ENCODE measurements at regions of chr17 and their contacts with region 1.

Region 1: DNA sequence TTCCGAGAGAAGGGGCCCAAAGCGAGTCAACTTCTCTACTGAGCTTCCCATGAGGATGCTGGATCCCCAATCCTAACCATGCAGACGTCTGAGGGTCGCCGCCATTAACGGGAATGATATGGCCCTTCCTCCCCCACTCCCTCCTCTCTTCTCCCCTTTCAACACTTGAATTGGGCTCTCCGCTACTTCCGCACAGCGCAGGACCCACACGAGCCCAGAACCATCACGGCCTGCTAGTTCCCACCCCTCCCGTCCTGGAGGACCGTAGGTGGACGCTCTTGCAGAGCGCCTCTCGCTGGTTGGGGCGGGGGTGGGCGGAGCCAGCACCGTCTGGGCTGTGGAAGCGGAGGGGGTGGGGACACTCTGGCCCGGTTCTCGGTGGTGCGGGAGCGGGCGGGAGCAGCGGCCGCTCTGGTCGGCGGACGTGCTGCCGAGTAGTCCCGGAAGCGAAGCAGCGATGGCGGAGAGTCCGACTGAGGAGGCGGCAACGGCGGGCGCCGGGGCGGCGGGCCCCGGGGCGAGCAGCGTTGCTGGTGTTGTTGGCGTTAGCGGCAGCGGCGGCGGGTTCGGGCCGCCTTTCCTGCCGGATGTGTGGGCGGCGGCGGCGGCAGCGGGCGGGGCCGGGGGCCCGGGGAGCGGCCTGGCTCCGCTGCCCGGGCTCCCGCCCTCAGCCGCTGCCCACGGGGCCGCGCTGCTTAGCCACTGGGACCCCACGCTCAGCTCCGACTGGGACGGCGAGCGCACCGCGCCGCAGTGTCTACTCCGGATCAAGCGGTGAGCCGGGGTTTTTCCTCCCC is at the start of gene UBE2Z:
- DNase-seq: peak; percentile 96
- H3K4me3 ChIP-seq: peak within 1 kb of the TSS; percentile 50 to 84 (median 68)
- H3K27ac ChIP-seq: peak within 1 kb of the TSS; percentile 89
- H3K4me1 ChIP-seq: peaks cover 27% of the 10 kb centered on the region
- H3K27me3 ChIP-seq: no peaks in the 10 kb centered on the region
- CTCF ChIP-seq: peak in 1 of 2 donors; percentile 8
- POLR2A ChIP-seq: peak; percentile 82
- total RNA-seq, gene UBE2Z: 95.1 and 104 TPM in 2 replicates

Region 2: GRCh38 chr17:48841395-48841831 is 66.8 kb before region 1 on chr17:
- CTCF ChIA-PET with region 1: no interaction called
- POLR2A ChIA-PET with region 1: no interaction called
- dilution Hi-C with region 1: no loop called
- intact Hi-C with region 1: no loop called
- DNase-seq: peak; percentile 80
- H3K4me3 ChIP-seq: peak overlapping the region; percentile 18 to 75 (median 37)
- H3K27ac ChIP-seq: peak overlapping the region; percentile 60
- H3K4me1 ChIP-seq: peaks cover 18% of the 10 kb centered on the region
- H3K27me3 ChIP-seq: no peaks in the 10 kb centered on the region
- CTCF ChIP-seq: no peak
- POLR2A ChIP-seq: no peak

Region 3: GRCh38 chr17:48925991-48926342 is 17.7 kb after region 1 on chr17:
- CTCF ChIA-PET with region 1: no interaction called
- POLR2A ChIA-PET with region 1: no interaction called
- dilution Hi-C with region 1: no loop called
- intact Hi-C with region 1: no loop called
- DNase-seq: no peak
- H3K4me3 ChIP-seq: no peak overlapping the region
- H3K27ac ChIP-seq: no peak overlapping the region
- H3K4me1 ChIP-seq: peaks cover 3% of the 10 kb centered on the region
- H3K27me3 ChIP-seq: no peaks in the 10 kb centered on the region
- CTCF ChIP-seq: no peak
- POLR2A ChIP-seq: no peak

Region 4: DNA sequence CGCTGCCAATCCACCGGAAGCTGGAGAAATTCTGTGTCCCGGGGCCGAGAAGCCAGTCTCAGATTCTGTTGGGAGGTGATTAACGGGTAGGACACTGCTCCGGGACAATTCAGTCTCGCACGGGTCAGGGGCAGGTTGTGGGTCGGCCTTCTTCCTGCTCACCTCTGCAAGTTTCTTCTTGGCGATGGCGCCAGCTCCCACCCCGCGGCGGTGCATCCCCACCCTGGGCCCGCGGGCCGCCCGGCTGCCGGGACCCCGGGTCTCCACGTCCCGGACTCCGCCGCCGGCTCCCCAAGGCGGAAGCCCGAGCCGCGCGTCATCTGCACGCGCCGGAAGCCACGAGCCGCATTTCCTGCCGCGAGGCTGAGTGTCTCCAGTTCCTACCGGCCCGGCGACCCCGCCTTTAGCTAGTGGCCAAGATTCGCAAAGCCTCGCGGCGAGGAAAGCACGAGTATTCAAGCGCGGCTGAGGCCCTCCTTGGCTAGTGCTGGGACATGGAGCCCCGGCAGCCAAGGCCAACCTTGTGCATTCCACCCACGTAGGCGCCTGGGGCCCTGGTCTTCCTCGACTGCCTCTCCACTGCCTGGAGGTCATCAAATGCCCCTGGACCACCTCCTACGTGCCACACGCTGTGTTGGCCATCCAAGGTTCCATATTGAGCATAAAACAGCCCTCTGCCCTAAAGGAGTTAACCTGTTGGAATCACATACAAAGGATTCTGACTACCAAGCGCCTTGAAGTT is 36.4 kb after region 1 on chr17 and contains the start of gene SNF8:
- CTCF ChIA-PET with region 1: no interaction called
- POLR2A ChIA-PET with region 1: no interaction called
- dilution Hi-C with region 1: no loop called
- intact Hi-C with region 1: loop called (anchors 2 kb)
- DNase-seq: peak; percentile 90
- H3K4me3 ChIP-seq: peak within 1 kb of the TSS; percentile 67 to 94 (median 73)
- H3K27ac ChIP-seq: peak within 1 kb of the TSS; percentile 70
- H3K4me1 ChIP-seq: peaks cover 15% of the 10 kb centered on the region
- H3K27me3 ChIP-seq: no peaks in the 10 kb centered on the region
- CTCF ChIP-seq: no peak
- POLR2A ChIP-seq: peak; percentile 90
- total RNA-seq, gene SNF8: 166 and 173 TPM in 2 replicates

Region 5: GRCh38 chr17:49201481-49201927 is 293.3 kb after region 1 on chr17:
- CTCF ChIA-PET with region 1: no interaction called
- POLR2A ChIA-PET with region 1: no interaction called
- dilution Hi-C with region 1: no loop called
- intact Hi-C with region 1: no loop called
- DNase-seq: peak; percentile 69
- H3K4me3 ChIP-seq: no peak overlapping the region
- H3K27ac ChIP-seq: peak overlapping the region; percentile 58
- H3K4me1 ChIP-seq: peaks cover 20% of the 10 kb centered on the region
- H3K27me3 ChIP-seq: no peaks in the 10 kb centered on the region
- CTCF ChIP-seq: no peak
- POLR2A ChIP-seq: peak; percentile 59